PC-9 (cell line): ENCODE measurements at regions of chr6 and their contacts with region 1.

Region 1: DNA sequence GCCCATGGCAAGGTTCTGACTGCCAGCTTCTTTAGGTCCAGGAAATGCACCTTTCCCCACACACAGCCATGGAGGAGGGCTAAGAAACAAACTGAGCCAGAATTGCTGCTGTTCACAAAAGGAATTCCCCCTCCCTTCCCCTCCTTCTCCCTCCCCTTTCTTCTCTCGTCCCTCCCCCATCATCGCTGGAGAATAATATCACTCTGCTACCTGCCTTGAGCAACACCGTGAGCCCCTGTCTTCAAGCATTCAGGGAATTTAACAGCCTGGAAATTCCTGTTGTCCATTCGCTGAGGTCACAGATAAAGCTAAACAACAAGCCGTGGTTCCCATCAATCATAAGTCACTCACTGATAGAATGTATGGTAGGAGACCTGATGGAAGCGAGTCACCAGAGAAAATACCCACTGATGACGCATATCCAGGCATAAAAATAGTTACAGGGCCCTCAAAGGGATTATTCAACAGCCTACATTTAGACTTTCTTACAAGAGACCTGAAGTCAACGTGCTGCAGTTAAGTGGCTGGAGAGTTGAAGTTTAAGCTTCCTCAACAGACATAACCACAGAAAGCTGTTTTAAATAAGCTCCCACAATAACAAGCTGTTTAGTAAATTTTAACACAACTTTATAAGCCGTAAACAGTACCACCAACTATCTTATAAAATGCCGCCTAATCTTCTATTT is 59.7 kb downstream of the HIVEP2 start:
- DNase-seq: peak; percentile 82 to 99
- H3K4me3 ChIP-seq: peak overlapping the region; percentile 19; the same call in 1 of the 2 replicates
- H3K27ac ChIP-seq: peak overlapping the region; percentile 74
- H3K4me1 ChIP-seq: peaks cover 41% of the 10 kb centered on the region
- H3K27me3 ChIP-seq: no peaks in the 10 kb centered on the region
- CTCF ChIP-seq: no peak

Region 2: DNA sequence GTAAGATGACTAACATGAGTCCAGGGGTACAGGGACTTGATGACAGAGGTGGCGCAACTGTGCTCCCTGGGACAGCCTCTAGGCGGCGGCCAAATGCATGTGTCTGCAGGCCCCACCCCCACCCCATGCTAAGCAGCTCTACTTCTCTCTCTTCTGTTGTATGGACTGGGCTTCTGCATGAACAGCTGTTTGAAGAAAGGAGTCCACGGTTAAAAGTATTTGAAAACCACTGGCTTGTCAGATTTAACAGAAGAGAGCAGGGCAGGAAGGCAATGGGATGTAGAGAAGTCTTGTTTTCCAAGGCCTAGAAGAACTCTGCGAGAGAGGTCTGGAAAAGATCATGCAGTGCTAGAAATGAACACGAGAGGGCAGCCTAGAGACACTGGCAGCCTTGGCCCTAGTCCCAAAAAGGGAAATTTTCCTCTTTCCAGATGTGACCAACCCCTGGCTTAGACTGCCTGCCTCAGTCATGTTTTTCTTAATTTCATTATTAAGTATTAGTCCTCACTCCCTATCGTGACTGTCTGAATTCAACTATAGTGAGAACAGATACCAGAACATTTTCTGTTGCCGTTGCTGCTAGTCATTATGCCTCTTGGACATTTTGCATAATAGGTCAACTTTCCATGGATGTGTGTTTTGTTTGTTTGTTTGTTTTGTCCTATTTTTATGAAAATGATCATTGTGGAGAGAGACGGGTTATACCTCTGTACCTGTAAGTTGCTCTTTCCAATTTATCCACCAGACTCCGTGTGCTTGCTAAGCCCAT is 318.5 kb before region 1 on chr6:
- CTCF ChIA-PET with region 1: no interaction called
- POLR2A ChIA-PET with region 1: no interaction called
- intact Hi-C with region 1: loop called (anchors 2 kb)
- DNase-seq: peak; percentile 44 to 56
- H3K4me3 ChIP-seq: no peak overlapping the region
- H3K27ac ChIP-seq: no peak overlapping the region
- H3K4me1 ChIP-seq: peaks cover 20% of the 10 kb centered on the region
- H3K27me3 ChIP-seq: no peaks in the 10 kb centered on the region
- CTCF ChIP-seq: peak; percentile 90

Region 3: DNA sequence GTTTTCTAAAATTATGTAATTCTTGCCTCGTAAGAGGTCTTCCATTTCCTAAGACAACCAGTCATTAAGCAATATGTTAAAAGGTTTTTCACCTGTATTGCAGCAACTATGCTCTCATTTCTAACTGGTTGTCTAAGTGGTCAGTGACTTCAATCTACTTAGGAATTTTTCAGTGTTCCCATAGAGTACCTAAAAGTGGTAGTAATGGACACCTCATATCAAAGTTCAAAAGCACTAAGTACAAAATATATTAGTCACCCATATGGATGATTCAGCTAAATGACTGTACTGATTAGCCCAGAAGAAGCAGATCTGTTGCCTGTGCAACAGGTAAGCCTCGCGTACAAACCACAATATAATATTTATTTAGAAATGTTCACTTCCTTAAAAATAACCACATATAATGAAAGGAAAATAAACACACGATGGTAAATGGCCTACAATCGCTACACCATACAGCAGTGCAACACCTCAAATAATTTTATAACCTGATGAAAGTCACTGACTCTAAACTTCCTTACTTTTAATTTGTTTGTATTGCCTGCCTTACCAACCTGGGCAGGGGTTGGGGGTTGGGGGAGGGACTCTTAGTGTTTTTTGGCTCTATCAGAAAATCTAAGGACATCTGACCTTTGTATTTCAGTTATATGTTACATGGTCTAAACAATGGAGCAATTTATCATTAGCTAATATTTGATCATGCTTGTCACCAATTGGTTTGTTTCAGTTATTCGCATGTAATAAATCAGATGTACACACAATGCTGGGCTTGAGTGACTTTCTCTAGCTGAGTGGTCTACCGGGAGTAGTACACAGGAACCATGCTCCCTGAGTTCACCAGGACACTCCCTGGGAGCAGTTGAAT is 46.3 kb before region 1 on chr6:
- CTCF ChIA-PET with region 1: no interaction called
- POLR2A ChIA-PET with region 1: interaction called, 10 read pairs
- intact Hi-C with region 1: loop called (anchors 1 kb)
- DNase-seq: peak in 1 of 2 experiments; percentile 99
- H3K4me3 ChIP-seq: peak overlapping the region; percentile 36; the same call in 1 of the 2 replicates
- H3K27ac ChIP-seq: peak overlapping the region; percentile 94
- H3K4me1 ChIP-seq: peaks cover 70% of the 10 kb centered on the region
- H3K27me3 ChIP-seq: no peaks in the 10 kb centered on the region
- CTCF ChIP-seq: no peak

Region 4: DNA sequence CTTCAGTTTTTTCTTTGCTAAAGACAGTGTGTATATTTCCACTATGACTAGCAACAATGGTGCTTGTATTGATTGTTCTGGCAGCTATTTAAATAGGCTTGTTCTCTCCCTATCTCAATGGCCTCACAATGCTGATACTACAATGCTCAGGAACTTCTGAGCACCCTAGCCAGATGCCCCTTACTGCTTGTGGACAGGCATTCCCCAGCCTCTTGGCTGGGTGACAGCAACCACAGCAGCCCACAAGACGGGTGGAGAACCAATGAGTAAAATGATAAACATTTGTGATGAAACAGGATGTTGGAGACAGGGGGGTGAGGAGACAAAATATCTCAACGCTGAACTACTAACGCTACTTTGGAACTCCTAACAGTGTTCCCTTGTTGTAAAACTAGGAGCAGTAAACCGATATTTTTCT is 17.3 kb after region 1 on chr6:
- CTCF ChIA-PET with region 1: no interaction called
- POLR2A ChIA-PET with region 1: no interaction called
- intact Hi-C with region 1: loop called (anchors 2 kb)
- DNase-seq: peak; percentile 81 to 91
- H3K4me3 ChIP-seq: peak overlapping the region; percentile 40; the same call in 1 of the 2 replicates
- H3K27ac ChIP-seq: peak overlapping the region; percentile 82
- H3K4me1 ChIP-seq: peaks cover 38% of the 10 kb centered on the region
- H3K27me3 ChIP-seq: no peaks in the 10 kb centered on the region
- CTCF ChIP-seq: no peak

Region 5: GRCh38 chr6:142952614-142953013 is 67.3 kb after region 1 on chr6:
- CTCF ChIA-PET with region 1: no interaction called
- POLR2A ChIA-PET with region 1: no interaction called
- intact Hi-C with region 1: no loop called
- DNase-seq: no peak
- H3K4me3 ChIP-seq: no peak overlapping the region
- H3K27ac ChIP-seq: no peak overlapping the region
- H3K4me1 ChIP-seq: peaks cover 11% of the 10 kb centered on the region
- H3K27me3 ChIP-seq: no peaks in the 10 kb centered on the region
- CTCF ChIP-seq: no peak

Region 6: GRCh38 chr6:142966294-142966693 is 81.0 kb after region 1 on chr6:
- CTCF ChIA-PET with region 1: no interaction called
- POLR2A ChIA-PET with region 1: interaction called, 38 read pairs
- intact Hi-C with region 1: no loop called
- DNase-seq: no peak
- H3K4me3 ChIP-seq: no peak overlapping the region
- H3K27ac ChIP-seq: no peak overlapping the region
- H3K4me1 ChIP-seq: no peaks in the 10 kb centered on the region
- H3K27me3 ChIP-seq: no peaks in the 10 kb centered on the region
- CTCF ChIP-seq: no peak